PC-9 (cell line): ENCODE measurements at regions of chr1 and their contacts with region 1.

Region 1: DNA sequence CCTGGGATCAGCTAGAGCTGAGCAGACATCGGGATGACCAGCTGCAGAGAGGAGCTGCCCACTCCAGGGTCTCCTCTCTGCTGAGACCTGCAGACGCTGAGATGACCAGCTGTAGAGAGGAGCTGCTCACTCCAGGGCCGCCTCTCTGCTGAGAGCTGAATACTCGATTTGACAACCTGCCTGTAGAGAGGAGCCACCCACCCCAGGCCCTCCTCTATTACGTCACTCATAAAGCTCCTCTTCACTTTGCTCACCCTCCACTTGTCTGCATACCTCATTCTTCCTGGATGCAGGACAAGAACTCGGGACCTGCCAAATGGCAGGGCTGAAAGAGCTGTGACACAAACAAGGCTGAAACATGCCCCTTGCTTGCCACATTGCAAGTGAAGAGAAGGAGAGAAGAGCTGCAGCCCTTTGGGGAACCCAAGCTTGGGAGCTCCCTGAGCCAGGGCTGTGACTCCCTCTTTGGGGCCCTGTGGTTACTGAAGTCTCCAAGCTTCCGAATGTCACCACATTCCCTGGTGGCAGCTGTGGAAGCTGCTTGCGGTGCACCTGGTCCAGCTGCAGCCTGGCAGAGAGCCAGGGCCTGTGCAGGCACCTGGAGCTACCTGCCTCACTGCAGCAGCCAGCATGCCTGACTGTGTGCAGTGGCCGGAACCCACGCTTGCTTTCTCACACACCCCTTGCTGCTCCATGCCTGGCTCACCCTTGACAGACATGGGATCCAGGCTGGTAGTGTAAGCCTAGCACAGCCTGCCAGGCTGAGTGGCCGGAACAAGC is 59.6 kb downstream of the CC2D1B start:
- DNase-seq: no peak
- H3K4me3 ChIP-seq: no peak overlapping the region
- H3K27ac ChIP-seq: no peak overlapping the region
- H3K4me1 ChIP-seq: no peaks in the 10 kb centered on the region
- H3K27me3 ChIP-seq: no peaks in the 10 kb centered on the region
- CTCF ChIP-seq: no peak

Region 2: DNA sequence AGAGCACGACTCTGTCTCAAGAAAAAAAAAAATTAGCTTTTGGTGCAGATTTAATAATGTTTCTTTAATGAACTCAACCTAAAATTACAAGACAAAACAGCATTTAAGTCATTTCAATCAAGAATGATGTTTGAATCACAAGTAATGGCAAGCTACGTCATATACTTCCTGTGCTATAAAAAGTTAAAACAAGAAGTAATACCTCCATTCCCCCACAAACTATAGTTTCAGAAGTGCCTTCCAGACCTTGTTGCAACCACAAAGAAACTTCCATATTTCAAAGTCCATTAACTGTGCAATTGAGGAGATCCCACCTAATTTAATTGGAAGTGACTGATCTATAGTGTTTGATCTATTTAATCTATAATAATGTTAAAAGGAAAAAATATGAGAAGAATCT is 443.0 kb before region 1 on chr1:
- CTCF ChIA-PET with region 1: interaction called, 11 read pairs
- POLR2A ChIA-PET with region 1: no interaction called
- intact Hi-C with region 1: no loop called
- DNase-seq: no peak
- H3K4me3 ChIP-seq: no peak overlapping the region
- H3K27ac ChIP-seq: no peak overlapping the region
- H3K4me1 ChIP-seq: no peaks in the 10 kb centered on the region
- H3K27me3 ChIP-seq: no peaks in the 10 kb centered on the region
- CTCF ChIP-seq: no peak

Region 3: GRCh38 chr1:52323731-52324130 is 17.3 kb after region 1 on chr1:
- CTCF ChIA-PET with region 1: no interaction called
- POLR2A ChIA-PET with region 1: no interaction called
- intact Hi-C with region 1: no loop called
- DNase-seq: no peak
- H3K4me3 ChIP-seq: no peak overlapping the region
- H3K27ac ChIP-seq: no peak overlapping the region
- H3K4me1 ChIP-seq: no peaks in the 10 kb centered on the region
- H3K27me3 ChIP-seq: no peaks in the 10 kb centered on the region
- CTCF ChIP-seq: no peak